GM18951 (cell line): ENCODE measurements at regions of chr4 and their contacts with region 1.

Region 1: DNA sequence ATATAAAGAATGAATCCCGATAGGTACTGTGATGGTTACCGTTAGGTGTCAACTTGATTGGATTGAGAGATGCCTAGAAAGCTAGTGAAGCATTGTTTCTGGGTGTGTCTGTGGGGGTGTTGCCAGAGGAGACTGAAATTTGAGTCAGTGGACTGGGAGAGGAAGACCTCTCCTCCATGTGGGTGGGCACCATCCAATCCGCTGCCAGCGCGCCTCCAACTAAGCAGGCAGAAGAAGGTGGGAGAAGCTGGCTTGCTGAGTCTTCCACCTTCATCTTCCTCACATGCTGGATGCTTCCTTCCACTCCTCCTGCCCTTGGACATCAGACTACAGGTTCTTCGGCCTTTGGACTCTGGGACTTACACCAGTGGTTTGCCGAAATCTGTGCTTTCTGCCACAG is 40.1 kb downstream of the WFS1 start:
- POLR2A ChIP-seq: no peak

Region 2: GRCh38 chr4:6264225-6264540 is 45.6 kb before region 1 on chr4:
- in situ Hi-C with region 1: loop called (anchors 5 kb)
- POLR2A ChIP-seq: no peak